ENCODE measurements at regions of chr3 and their contacts with region 1.

Region 1: GRCh38 chr3:181700168-181701087 is 11.3 kb upstream of the SOX2 start:
- DNase-seq: peak; percentile 64
- ATAC-seq: peak; percentile 85
- H3K4me3 ChIP-seq: peak overlapping the region; percentile 27 to 48
- H3K27ac ChIP-seq: no peak overlapping the region
- H3K4me1 ChIP-seq: peaks cover 15% of the 10 kb centered on the region
- H3K27me3 ChIP-seq: peaks cover 39% of the 10 kb centered on the region
- CTCF ChIP-seq: peak; percentile 97

Region 2: DNA sequence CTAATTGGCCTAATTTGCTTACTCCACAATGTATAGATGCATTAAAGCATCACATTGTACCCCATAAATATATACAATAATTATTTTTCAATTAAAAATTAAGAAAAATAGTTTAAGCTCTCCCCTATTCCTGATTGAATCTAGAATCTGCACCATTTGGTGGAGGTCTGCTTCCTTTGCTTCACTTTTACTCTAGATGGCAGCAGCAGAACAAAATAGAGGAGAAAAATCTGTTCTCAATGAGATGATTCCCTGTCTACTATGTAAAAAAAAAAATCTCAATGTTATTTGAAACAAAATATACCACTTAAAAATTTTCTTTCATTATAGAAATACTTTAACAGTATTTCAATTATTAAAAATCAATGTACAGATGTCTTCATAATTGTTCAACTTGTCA is 897.6 kb before region 1 on chr3:
- CTCF ChIA-PET with region 1: interaction called, 7 read pairs
- POLR2A ChIA-PET with region 1: no interaction called
- in situ Hi-C with region 1: no loop called
- intact Hi-C with region 1: loop called (anchors 10 kb)
- DNase-seq: peak; percentile 10
- ATAC-seq: peak; percentile 70; the same call in 1 of the 2 replicates
- H3K4me3 ChIP-seq: no peak overlapping the region
- H3K27ac ChIP-seq: no peak overlapping the region
- H3K4me1 ChIP-seq: no peaks in the 10 kb centered on the region
- H3K27me3 ChIP-seq: no peaks in the 10 kb centered on the region
- CTCF ChIP-seq: peak; percentile 74; the same call in 1 of the 2 replicates

Region 3: GRCh38 chr3:181210275-181210674 is 490.2 kb before region 1 on chr3:
- CTCF ChIA-PET with region 1: interaction called, 9 read pairs
- POLR2A ChIA-PET with region 1: interaction called, 3 read pairs
- in situ Hi-C with region 1: no loop called
- intact Hi-C with region 1: loop called (anchors 2 kb)
- DNase-seq: no peak
- ATAC-seq: no peak
- H3K4me3 ChIP-seq: no peak overlapping the region
- H3K27ac ChIP-seq: no peak overlapping the region
- H3K4me1 ChIP-seq: no peaks in the 10 kb centered on the region
- H3K27me3 ChIP-seq: peaks cover 5% of the 10 kb centered on the region; the same call in 1 of the 2 replicates
- CTCF ChIP-seq: peak; percentile 48; the same call in 1 of the 2 replicates

Region 4: GRCh38 chr3:181326637-181327223 is 373.7 kb before region 1 on chr3:
- CTCF ChIA-PET with region 1: no interaction called
- POLR2A ChIA-PET with region 1: no interaction called
- in situ Hi-C with region 1: no loop called
- intact Hi-C with region 1: loop called (anchors 2 kb)
- DNase-seq: peak; percentile 8
- ATAC-seq: no peak
- H3K4me3 ChIP-seq: no peak overlapping the region
- H3K27ac ChIP-seq: no peak overlapping the region
- H3K4me1 ChIP-seq: no peaks in the 10 kb centered on the region
- H3K27me3 ChIP-seq: no peaks in the 10 kb centered on the region
- CTCF ChIP-seq: peak; percentile 78

Region 5: DNA sequence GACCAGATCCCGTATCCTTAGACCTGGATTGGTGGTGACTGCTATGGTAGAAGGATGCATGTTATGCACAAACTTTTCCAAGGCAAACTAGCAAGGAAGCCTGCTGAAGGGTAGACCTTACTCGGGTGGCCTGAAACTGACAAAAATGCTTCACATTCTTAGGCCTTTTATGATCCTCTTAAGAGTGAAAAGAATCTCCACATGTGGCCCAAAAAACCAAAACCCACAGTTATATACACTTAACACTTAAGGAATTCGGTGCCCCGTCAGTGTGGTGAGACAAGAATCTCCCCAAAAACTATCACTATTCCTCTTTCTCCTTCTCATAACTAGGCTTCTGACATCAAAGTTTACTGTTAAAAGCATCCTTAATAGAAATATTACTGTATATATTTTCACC is 118.8 kb before region 1 on chr3:
- CTCF ChIA-PET with region 1: no interaction called
- POLR2A ChIA-PET with region 1: no interaction called
- in situ Hi-C with region 1: no loop called
- intact Hi-C with region 1: no loop called
- DNase-seq: no peak
- ATAC-seq: no peak
- H3K4me3 ChIP-seq: no peak overlapping the region
- H3K27ac ChIP-seq: no peak overlapping the region
- H3K4me1 ChIP-seq: no peaks in the 10 kb centered on the region
- H3K27me3 ChIP-seq: no peaks in the 10 kb centered on the region
- CTCF ChIP-seq: no peak

Region 6: DNA sequence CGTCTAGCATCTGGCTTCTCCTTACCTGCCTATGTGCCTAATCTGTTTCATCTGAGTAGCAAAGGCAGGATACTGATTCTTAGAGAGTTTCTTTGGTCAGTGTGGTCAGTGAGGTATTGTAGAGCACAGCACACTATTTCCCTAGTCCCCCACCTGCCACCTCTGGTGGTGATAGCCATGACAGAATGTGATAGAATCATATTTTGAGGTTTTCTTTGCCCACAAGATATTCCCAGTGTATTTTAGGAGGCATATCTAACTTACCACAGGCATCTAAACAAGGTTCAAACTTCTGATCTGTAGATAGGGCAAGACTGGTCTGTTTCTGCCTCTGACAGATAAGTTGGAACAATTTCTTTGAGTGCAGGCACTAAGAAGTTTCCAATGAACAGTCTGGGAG is 199.3 kb after region 1 on chr3:
- CTCF ChIA-PET with region 1: no interaction called
- POLR2A ChIA-PET with region 1: no interaction called
- in situ Hi-C with region 1: no loop called
- intact Hi-C with region 1: loop called (anchors 10 kb)
- DNase-seq: no peak
- ATAC-seq: no peak
- H3K4me3 ChIP-seq: no peak overlapping the region
- H3K27ac ChIP-seq: no peak overlapping the region
- H3K4me1 ChIP-seq: no peaks in the 10 kb centered on the region
- H3K27me3 ChIP-seq: no peaks in the 10 kb centered on the region
- CTCF ChIP-seq: no peak

Region 7: DNA sequence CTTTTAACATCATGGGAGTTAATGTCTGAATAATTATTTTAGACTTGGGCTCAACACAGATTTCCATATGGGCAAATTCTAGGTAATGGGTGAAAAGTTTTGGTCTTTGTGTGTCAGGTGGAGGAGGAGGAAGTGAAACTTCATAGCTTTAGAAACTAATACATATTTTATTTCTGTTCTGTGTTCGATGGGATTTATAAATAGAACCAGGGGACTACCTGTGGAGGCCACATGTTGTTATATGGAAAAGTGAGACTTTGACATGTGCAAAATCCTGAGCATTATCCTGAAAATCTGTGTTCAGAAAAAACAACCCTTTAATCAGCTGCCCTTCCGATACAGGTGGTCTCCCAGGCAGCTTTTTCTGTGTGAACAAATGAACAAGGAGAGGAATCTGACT is 220.8 kb after region 1 on chr3:
- CTCF ChIA-PET with region 1: interaction called, 12 read pairs
- POLR2A ChIA-PET with region 1: no interaction called
- in situ Hi-C with region 1: no loop called
- intact Hi-C with region 1: no loop called
- DNase-seq: no peak
- ATAC-seq: no peak
- H3K4me3 ChIP-seq: no peak overlapping the region
- H3K27ac ChIP-seq: no peak overlapping the region
- H3K4me1 ChIP-seq: no peaks in the 10 kb centered on the region
- H3K27me3 ChIP-seq: no peaks in the 10 kb centered on the region
- CTCF ChIP-seq: no peak

Region 8: GRCh38 chr3:182162297-182162696 is 461.9 kb after region 1 on chr3:
- CTCF ChIA-PET with region 1: interaction called, 15 read pairs
- POLR2A ChIA-PET with region 1: no interaction called
- in situ Hi-C with region 1: no loop called
- intact Hi-C with region 1: no loop called
- DNase-seq: no peak
- ATAC-seq: no peak
- H3K4me3 ChIP-seq: no peak overlapping the region
- H3K27ac ChIP-seq: no peak overlapping the region
- H3K4me1 ChIP-seq: no peaks in the 10 kb centered on the region
- H3K27me3 ChIP-seq: no peaks in the 10 kb centered on the region
- CTCF ChIP-seq: no peak

Measured in Panc1 (cell line).